ENCODE measurements at regions of chr2 and their contacts with region 1.

Region 1: DNA sequence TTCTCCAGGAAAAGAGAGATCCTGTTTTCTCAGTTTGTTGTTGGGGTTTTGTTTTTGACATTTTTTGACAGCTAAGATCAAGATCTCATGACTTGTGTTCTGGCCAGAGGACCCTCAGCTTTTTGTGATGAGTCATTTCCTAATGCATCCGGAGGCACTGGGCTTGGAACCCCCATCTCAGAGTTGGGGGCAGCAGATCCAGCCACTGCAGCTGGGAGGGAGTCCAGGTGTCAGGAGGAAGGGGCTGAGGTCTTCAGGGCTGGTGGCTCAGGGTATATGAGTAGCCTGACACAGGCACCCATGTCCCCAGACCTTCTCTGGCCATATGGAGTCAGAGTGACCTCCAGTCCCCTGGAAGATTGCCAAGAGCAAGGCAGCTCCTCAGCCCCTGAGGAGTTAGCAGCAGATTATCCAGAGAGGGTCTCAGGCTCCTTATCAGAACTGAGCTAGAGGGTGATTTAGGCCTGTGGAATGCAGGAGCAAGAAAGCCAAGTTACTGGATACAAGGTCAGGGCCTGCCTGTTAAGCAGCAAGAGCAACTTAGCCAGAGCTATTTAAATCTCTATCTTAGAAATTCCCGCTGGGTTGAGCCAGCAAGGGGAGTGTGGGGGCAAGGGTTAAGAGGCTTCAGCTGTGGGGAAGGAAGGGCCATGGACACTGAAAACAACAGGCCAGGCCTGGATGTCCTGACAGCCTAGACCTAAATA is 62.4 kb downstream of the TANC1 start:
- DNase-seq: peak; percentile 94
- H3K4me3 ChIP-seq: peak overlapping the region in 1 of 3 experiments; percentile 12
- H3K27ac ChIP-seq: peak overlapping the region; percentile 82
- H3K4me1 ChIP-seq: peaks cover 50% of the 10 kb centered on the region
- H3K27me3 ChIP-seq: no peaks in the 10 kb centered on the region
- CTCF ChIP-seq: no peak
- POLR2A ChIP-seq: no peak

Region 2: DNA sequence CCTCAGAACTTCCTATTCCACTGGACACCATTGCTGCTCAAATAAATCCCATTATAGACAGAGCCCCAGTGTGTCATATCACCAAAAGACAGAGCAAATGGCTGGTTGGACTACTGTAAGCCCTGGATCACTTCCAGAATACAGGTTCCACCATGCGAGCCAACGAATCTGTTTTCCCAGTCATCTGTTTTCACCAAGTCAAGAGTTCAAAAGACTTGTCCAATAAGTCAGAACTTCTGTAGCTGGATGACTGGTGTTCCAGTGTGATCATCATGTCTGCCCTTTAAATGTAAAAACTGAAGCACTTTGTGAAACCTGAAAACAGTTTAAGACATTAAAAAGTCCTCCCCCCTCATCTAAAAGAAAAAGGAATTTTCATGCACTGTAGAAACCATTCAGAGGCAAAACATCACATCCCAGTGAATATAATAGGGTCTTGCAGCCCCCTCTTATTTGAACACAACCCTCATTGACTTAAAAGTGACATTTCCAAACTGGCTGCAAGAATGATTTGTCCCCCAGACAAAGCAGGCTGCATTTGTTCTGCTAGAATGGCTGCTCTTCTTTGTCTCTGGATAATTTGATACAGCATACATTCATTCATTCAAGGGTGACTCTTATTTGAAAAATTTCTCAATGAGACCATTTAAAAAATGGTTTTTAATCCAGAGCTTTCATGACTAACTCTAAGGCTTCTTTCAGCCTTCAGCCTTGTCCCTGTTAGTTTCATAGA is 127.0 kb before region 1 on chr2:
- CTCF ChIA-PET with region 1: interaction called, 5 read pairs
- POLR2A ChIA-PET with region 1: no interaction called
- dilution Hi-C with region 1: no loop called
- intact Hi-C with region 1: loop called (anchors 2 kb)
- DNase-seq: no peak
- H3K4me3 ChIP-seq: no peak overlapping the region
- H3K27ac ChIP-seq: no peak overlapping the region
- H3K4me1 ChIP-seq: no peaks in the 10 kb centered on the region
- H3K27me3 ChIP-seq: no peaks in the 10 kb centered on the region
- CTCF ChIP-seq: no peak
- POLR2A ChIP-seq: no peak

Region 3: DNA sequence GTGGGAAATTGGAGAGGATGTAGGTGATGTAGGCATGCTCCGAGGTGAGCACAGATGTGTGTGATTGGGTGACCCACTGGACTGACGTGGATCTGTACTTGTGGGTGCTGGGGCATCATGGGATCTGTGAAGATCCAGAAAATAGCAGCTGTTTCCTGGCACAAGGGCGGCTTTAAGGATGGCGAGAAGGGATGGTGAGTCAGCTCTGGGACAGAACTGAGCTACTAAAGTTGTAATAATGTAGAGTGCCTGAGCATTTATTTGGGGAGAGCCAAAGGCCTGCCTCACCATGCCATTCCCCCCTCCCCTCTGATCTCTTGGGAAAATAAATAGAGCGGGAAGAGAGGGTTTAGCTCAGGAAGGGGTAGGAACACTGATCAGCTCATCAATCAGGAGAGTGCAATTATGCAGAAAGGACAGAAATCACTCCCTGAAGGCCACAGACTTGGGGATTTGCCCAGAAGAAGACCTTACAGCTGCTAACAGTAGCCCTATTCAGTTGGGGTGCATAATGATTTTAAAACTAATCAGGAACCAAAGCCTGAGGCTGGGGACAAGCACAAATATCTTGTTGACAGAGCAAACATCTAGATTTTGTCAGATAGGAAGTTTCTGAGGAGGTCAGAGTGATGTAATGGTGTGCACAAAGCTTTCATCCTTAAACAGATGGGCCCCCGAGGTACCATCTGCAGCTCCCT is 32.1 kb before region 1 on chr2:
- CTCF ChIA-PET with region 1: interaction called, 10 read pairs
- POLR2A ChIA-PET with region 1: interaction called, 6 read pairs
- dilution Hi-C with region 1: no loop called
- intact Hi-C with region 1: loop called (anchors 1 kb)
- DNase-seq: peak; percentile 86
- H3K4me3 ChIP-seq: peak overlapping the region in 1 of 3 experiments; percentile 42
- H3K27ac ChIP-seq: peak overlapping the region; percentile 87
- H3K4me1 ChIP-seq: peaks cover 41% of the 10 kb centered on the region
- H3K27me3 ChIP-seq: no peaks in the 10 kb centered on the region
- CTCF ChIP-seq: no peak
- POLR2A ChIP-seq: peak; percentile 32

Region 4: GRCh38 chr2:159064446-159065301 is 33.8 kb after region 1 on chr2:
- CTCF ChIA-PET with region 1: interaction called, 8 read pairs
- POLR2A ChIA-PET with region 1: no interaction called
- dilution Hi-C with region 1: no loop called
- intact Hi-C with region 1: loop called (anchors 5 kb)
- DNase-seq: peak; percentile 94
- H3K4me3 ChIP-seq: no peak overlapping the region
- H3K27ac ChIP-seq: peak overlapping the region; percentile 54
- H3K4me1 ChIP-seq: peaks cover 42% of the 10 kb centered on the region
- H3K27me3 ChIP-seq: no peaks in the 10 kb centered on the region
- CTCF ChIP-seq: no peak
- POLR2A ChIP-seq: peak; percentile 26

Region 5: GRCh38 chr2:159098815-159099455 is 68.1 kb after region 1 on chr2:
- CTCF ChIA-PET with region 1: interaction called, 4 read pairs
- POLR2A ChIA-PET with region 1: no interaction called
- dilution Hi-C with region 1: no loop called
- intact Hi-C with region 1: loop called (anchors 1 kb)
- DNase-seq: peak; percentile 81
- H3K4me3 ChIP-seq: peak overlapping the region in 1 of 3 experiments; percentile 44
- H3K27ac ChIP-seq: peak overlapping the region; percentile 92
- H3K4me1 ChIP-seq: peaks cover 55% of the 10 kb centered on the region
- H3K27me3 ChIP-seq: no peaks in the 10 kb centered on the region
- CTCF ChIP-seq: no peak
- POLR2A ChIP-seq: peak; percentile 64